Heart left ventricle (tissue), 16 donors: ENCODE measurements at regions of chr5 and their contacts with region 1.

Region 1: GRCh38 chr5:55467862-55468551 is 66.8 kb downstream of the PLPP1 start:
- DNase-seq: no peak
- ATAC-seq: no peak
- H3K4me3 ChIP-seq: no peak overlapping the region
- H3K27ac ChIP-seq: peak overlapping the region in 8 of 12 donors; percentile 2 to 61 (median 34)
- H3K4me1 ChIP-seq: peaks cover 0 to 40% (median 30%) of the 10 kb centered on the region in 12 donors
- H3K27me3 ChIP-seq: no peaks in the 10 kb centered on the region
- CTCF ChIP-seq: no peak
- POLR2A ChIP-seq: no peak

Region 2: GRCh38 chr5:55509796-55510522 is 42.0 kb after region 1 on chr5:
- intact Hi-C with region 1: loop called in 1 of 10 experiments (anchors 5 kb)
- DNase-seq: no peak
- ATAC-seq: peak; percentile 71 to 78 (median 72)
- H3K4me3 ChIP-seq: no peak overlapping the region
- H3K27ac ChIP-seq: peak overlapping the region in 9 of 12 donors; percentile 2 to 60 (median 20)
- H3K4me1 ChIP-seq: peaks cover 4 to 73% (median 49%) of the 10 kb centered on the region in 12 donors
- H3K27me3 ChIP-seq: no peaks in the 10 kb centered on the region
- CTCF ChIP-seq: no peak
- POLR2A ChIP-seq: no peak

Region 3: DNA sequence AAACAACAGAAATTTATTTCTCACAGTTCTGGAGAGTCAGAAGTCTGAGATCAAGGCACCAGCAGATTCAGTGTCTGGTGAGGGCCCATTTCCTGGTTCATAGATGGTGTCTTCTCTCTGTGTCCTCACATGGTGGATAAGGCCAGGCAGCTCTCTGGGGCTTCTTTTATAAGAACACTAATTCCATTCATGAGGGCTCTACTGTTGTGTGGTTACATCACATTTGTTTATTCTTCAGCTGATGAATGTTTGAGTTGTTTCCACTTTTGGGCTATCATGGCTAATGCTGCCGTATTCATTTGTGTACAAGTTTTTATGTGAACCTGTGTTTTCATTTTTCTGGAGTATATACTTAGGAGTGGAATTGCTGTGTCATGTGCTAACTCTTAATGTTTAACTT is 305.1 kb after region 1 on chr5:
- intact Hi-C with region 1: no loop called
- DNase-seq: no peak
- ATAC-seq: no peak
- H3K4me3 ChIP-seq: no peak overlapping the region
- H3K27ac ChIP-seq: no peak overlapping the region
- H3K4me1 ChIP-seq: no peaks in the 10 kb centered on the region
- H3K27me3 ChIP-seq: no peaks in the 10 kb centered on the region
- CTCF ChIP-seq: no peak
- POLR2A ChIP-seq: no peak

Region 4: DNA sequence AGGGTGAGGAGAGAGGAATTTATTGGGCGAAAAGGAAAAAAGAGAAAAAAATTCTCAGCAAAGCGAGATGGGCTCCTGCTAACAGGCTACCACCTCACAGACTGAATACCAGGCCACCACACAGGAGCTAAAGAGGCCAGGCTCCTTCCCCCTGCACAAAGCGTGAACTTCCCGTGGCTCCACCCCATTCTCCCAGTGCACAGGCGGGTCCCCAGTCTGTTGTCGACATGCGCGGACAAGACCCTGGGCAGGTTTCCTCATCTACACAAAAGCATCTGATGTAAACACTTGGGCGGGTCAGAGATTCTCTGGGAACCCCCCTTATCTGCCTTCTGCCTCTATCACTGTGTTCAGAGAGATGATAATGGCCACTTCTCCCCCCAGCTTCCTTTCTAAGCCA is 417.4 kb after region 1 on chr5:
- intact Hi-C with region 1: no loop called
- DNase-seq: no peak
- ATAC-seq: no peak
- H3K4me3 ChIP-seq: no peak overlapping the region
- H3K27ac ChIP-seq: no peak overlapping the region
- H3K4me1 ChIP-seq: no peaks in the 10 kb centered on the region
- H3K27me3 ChIP-seq: no peaks in the 10 kb centered on the region
- CTCF ChIP-seq: no peak
- POLR2A ChIP-seq: no peak